Activated CD4-positive, alpha-beta T cell treated with anti-CD3 and anti-CD28 coated beads for 36 hours (primary cell): ENCODE measurements at regions of chr1 and their contacts with region 1.

Region 1: GRCh38 chr1:116817582-116818064 is 63.4 kb downstream of the CD2 start:
- DNase-seq: peak; percentile 88
- ATAC-seq: peak; percentile 65
- H3K4me3 Mint-ChIP-seq: peak overlapping the region; percentile 44
- H3K27ac Mint-ChIP-seq: peak overlapping the region; percentile 91
- H3K4me1 Mint-ChIP-seq: peaks cover 59% of the 10 kb centered on the region
- H3K27me3 Mint-ChIP-seq: no peaks in the 10 kb centered on the region

Region 2: GRCh38 chr1:116570358-116571200 is 247.0 kb before region 1 on chr1 and contains the start of gene CD58:
- CTCF ChIA-PET with region 1: interaction called, 4 read pairs
- POLR2A ChIA-PET with region 1: no interaction called
- intact Hi-C with region 1: loop called (anchors 2 to 5 kb)
- DNase-seq: peak; percentile 93
- ATAC-seq: peak; percentile 77
- H3K4me3 Mint-ChIP-seq: peak within 1 kb of the TSS; percentile 91
- H3K27ac Mint-ChIP-seq: peak within 1 kb of the TSS; percentile 87
- H3K4me1 Mint-ChIP-seq: peaks cover 64% of the 10 kb centered on the region
- H3K27me3 Mint-ChIP-seq: peaks cover 8% of the 10 kb centered on the region
- total RNA-seq, gene CD58: 12.4 to 16.0 TPM

Region 3: DNA sequence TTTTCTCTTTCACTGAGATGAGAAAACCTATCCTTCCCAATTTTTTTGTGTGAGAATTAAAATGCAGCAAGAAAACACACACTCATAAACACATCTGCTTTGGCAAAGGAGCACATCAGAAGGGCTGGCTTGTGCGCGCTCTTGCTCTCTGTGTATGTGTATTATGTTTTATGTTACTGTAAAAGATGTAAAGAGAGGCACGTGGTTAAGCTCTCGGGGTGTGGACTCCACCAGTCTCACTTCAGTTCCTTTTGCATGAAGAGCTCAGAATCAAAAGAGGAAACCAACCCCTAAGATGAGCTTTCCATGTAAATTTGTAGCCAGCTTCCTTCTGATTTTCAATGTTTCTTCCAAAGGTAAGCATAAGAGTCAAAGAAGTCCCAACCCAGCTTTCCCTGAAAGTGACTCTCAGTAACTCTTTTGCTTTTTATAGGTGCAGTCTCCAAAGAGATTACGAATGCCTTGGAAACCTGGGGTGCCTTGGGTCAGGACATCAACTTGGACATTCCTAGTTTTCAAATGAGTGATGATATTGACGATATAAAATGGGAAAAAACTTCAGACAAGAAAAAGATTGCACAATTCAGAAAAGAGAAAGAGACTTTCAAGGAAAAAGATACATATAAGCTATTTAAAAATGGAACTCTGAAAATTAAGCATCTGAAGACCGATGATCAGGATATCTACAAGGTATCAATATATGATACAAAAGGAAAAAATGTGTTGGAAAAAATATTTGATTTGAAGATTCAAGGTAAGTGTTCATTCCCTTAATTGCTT is 63.2 kb before region 1 on chr1 and contains the start of gene CD2:
- CTCF ChIA-PET with region 1: interaction called, 10 read pairs
- POLR2A ChIA-PET with region 1: interaction called, 5 read pairs
- intact Hi-C with region 1: no loop called
- DNase-seq: peak; percentile 80
- ATAC-seq: peak; percentile 80
- H3K4me3 Mint-ChIP-seq: peak within 1 kb of the TSS; percentile 93
- H3K27ac Mint-ChIP-seq: peak within 1 kb of the TSS; percentile 100
- H3K4me1 Mint-ChIP-seq: peaks cover 41% of the 10 kb centered on the region
- H3K27me3 Mint-ChIP-seq: no peaks in the 10 kb centered on the region
- total RNA-seq, gene CD2: 287 to 291 TPM

Region 4: GRCh38 chr1:116769561-116769977 is 48.1 kb before region 1 on chr1:
- CTCF ChIA-PET with region 1: interaction called, 114 read pairs
- POLR2A ChIA-PET with region 1: interaction called, 54 read pairs
- intact Hi-C with region 1: loop called (anchors 1 kb)
- DNase-seq: peak; percentile 86
- ATAC-seq: peak; percentile 53
- H3K4me3 Mint-ChIP-seq: peak overlapping the region; percentile 93
- H3K27ac Mint-ChIP-seq: peak overlapping the region; percentile 100
- H3K4me1 Mint-ChIP-seq: peaks cover 96% of the 10 kb centered on the region
- H3K27me3 Mint-ChIP-seq: no peaks in the 10 kb centered on the region

Region 5: DNA sequence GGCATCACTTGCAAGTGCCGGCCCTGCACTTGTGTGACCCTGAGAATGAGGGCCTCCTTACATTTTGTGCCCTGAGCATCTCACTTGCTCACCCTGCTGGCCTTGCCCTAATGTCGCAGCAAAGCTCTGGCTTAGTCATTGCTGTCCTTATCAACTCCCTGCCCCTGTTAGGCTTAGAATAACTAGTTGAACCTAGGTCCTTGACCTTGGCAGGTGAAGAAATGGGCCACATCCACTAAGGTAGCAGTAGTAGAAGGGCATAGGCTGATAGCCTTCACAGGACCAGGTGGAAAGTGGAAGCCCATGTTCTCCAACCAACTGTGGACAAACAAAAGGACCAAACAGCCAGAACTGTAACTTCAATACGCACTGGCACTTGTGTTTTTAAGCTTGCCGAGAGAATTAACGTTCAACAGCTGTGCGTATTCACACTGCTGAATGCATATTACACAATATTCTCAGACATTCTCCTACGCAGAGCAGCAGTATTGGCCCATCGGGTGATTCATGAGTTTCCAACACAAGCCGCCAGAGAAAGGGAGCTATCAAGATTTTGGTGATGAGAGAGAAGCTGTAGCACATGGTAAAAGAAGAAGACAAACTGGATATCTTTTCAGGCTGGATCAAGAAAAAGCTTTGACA is 64.4 kb after region 1 on chr1:
- CTCF ChIA-PET with region 1: interaction called, 5 read pairs
- POLR2A ChIA-PET with region 1: no interaction called
- intact Hi-C with region 1: loop called in 1 of 2 experiments (anchors 5 kb)
- DNase-seq: peak; percentile 72
- ATAC-seq: peak; percentile 77
- H3K4me3 Mint-ChIP-seq: no peak overlapping the region
- H3K27ac Mint-ChIP-seq: no peak overlapping the region
- H3K4me1 Mint-ChIP-seq: peaks cover 14% of the 10 kb centered on the region
- H3K27me3 Mint-ChIP-seq: no peaks in the 10 kb centered on the region

Region 6: DNA sequence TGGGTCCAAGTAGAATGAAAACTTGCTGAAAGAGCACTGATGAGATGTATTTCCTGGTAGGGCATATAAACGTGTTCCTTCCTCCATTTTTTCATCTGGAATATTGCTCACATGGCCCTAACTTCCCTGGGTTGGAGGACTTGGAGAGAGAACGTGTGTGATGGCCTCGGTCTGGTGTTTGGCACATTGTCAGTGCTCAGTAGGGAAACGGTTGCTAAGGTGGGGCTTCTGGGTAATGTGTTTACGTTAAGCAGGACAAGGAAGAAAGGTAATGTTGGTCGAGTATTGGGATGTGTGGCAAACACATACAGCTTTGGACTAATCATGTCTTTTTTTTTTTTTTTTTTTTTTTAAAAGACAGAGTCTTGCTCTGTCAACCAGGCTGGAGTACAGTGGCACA is 248.7 kb after region 1 on chr1:
- CTCF ChIA-PET with region 1: no interaction called
- POLR2A ChIA-PET with region 1: no interaction called
- intact Hi-C with region 1: no loop called
- DNase-seq: no peak
- ATAC-seq: no peak
- H3K4me3 Mint-ChIP-seq: no peak overlapping the region
- H3K27ac Mint-ChIP-seq: no peak overlapping the region
- H3K4me1 Mint-ChIP-seq: peaks cover 50% of the 10 kb centered on the region
- H3K27me3 Mint-ChIP-seq: no peaks in the 10 kb centered on the region